ENCODE measurements at regions of chr4 and their contacts with region 1.

Region 1: GRCh38 chr4:151117371-151117962 is 18.0 kb downstream of the RPS3A start:
- DNase-seq: peak; percentile 58 to 71
- H3K4me3 ChIP-seq: no peak overlapping the region
- H3K4me3 Mint-ChIP-seq: no peak overlapping the region
- H3K27ac Mint-ChIP-seq: no peak overlapping the region
- H3K4me1 ChIP-seq: peaks cover 4% of the 10 kb centered on the region; the same call in 1 of the 2 replicates
- H3K4me1 Mint-ChIP-seq: no peaks in the 10 kb centered on the region
- H3K27me3 ChIP-seq: no peaks in the 10 kb centered on the region
- H3K27me3 Mint-ChIP-seq: no peaks in the 10 kb centered on the region
- CTCF ChIP-seq: peak; percentile 69 to 70

Region 2: GRCh38 chr4:151276787-151277562 is 159.5 kb after region 1 on chr4 and contains the start of gene PRSS48:
- CTCF ChIA-PET with region 1: no interaction called
- POLR2A ChIA-PET with region 1: no interaction called
- intact Hi-C with region 1: loop called (anchors 10 kb)
- DNase-seq: peak; percentile 74 to 85
- H3K4me3 ChIP-seq: no peak within 1 kb of the TSS
- H3K4me3 Mint-ChIP-seq: no peak within 1 kb of the TSS
- H3K27ac Mint-ChIP-seq: peak within 1 kb of the TSS; percentile 49
- H3K4me1 ChIP-seq: peaks cover 9% of the 10 kb centered on the region
- H3K4me1 Mint-ChIP-seq: peaks cover 33% of the 10 kb centered on the region
- H3K27me3 ChIP-seq: no peaks in the 10 kb centered on the region
- H3K27me3 Mint-ChIP-seq: no peaks in the 10 kb centered on the region
- CTCF ChIP-seq: peak; percentile 75 to 80
- total RNA-seq, gene PRSS48: not detected in 2 replicates

Region 3: DNA sequence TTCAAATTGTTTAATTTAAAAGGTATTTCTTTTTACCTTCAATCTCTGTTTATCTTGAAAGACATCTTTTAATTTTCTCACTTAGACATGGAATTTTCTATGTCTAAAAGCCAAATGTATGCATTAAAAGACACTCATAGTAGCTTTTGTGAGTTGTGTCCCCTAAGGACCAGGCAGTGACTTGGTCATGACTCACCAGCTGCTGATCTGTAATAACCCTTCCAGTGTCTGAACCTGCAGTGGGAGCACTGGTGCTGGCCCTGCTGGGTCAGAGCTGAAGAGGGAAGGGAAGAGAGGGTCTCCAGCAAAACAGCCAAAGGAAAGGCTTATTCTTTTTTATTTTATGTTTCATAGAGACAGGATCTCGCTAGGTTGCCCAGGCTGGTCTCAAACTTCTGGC is 239.0 kb after region 1 on chr4:
- CTCF ChIA-PET with region 1: no interaction called
- POLR2A ChIA-PET with region 1: no interaction called
- intact Hi-C with region 1: no loop called
- DNase-seq: no peak
- H3K4me3 ChIP-seq: no peak overlapping the region
- H3K4me3 Mint-ChIP-seq: no peak overlapping the region
- H3K27ac Mint-ChIP-seq: no peak overlapping the region
- H3K4me1 ChIP-seq: no peaks in the 10 kb centered on the region
- H3K4me1 Mint-ChIP-seq: peaks cover 12% of the 10 kb centered on the region
- H3K27me3 ChIP-seq: no peaks in the 10 kb centered on the region
- H3K27me3 Mint-ChIP-seq: no peaks in the 10 kb centered on the region
- CTCF ChIP-seq: no peak

Region 4: DNA sequence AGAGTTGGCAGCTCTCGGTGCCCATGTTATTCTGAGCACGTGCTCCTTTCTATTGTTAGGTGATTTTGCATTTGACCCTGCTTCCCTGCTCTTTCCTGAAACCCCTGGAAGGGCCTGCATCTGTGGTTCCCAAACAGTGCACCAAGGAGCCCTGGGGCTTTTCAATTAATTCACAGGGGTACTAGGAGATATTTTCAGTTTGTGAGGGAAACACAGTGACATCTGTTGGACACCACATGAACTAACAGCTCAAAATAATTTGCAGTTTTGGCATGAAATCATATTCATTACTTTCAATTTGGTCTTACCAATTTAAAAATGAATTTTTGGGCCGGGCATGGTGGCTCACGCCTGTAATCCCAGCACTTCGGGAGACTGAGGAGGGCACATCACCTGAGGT is 486.8 kb after region 1 on chr4:
- CTCF ChIA-PET with region 1: interaction called, 9 read pairs
- POLR2A ChIA-PET with region 1: no interaction called
- intact Hi-C with region 1: loop called (anchors 2 kb)
- DNase-seq: no peak
- H3K4me3 ChIP-seq: no peak overlapping the region
- H3K4me3 Mint-ChIP-seq: no peak overlapping the region
- H3K27ac Mint-ChIP-seq: no peak overlapping the region
- H3K4me1 ChIP-seq: peaks cover 18% of the 10 kb centered on the region
- H3K4me1 Mint-ChIP-seq: peaks cover 3% of the 10 kb centered on the region
- H3K27me3 ChIP-seq: no peaks in the 10 kb centered on the region
- H3K27me3 Mint-ChIP-seq: no peaks in the 10 kb centered on the region
- CTCF ChIP-seq: peak; percentile 23 to 62

Region 5: GRCh38 chr4:151614561-151614960 is 497.1 kb after region 1 on chr4:
- CTCF ChIA-PET with region 1: no interaction called
- POLR2A ChIA-PET with region 1: no interaction called
- intact Hi-C with region 1: loop called (anchors 2 kb)
- DNase-seq: no peak
- H3K4me3 ChIP-seq: no peak overlapping the region
- H3K4me3 Mint-ChIP-seq: no peak overlapping the region
- H3K27ac Mint-ChIP-seq: no peak overlapping the region
- H3K4me1 ChIP-seq: no peaks in the 10 kb centered on the region
- H3K4me1 Mint-ChIP-seq: no peaks in the 10 kb centered on the region
- H3K27me3 ChIP-seq: no peaks in the 10 kb centered on the region
- H3K27me3 Mint-ChIP-seq: no peaks in the 10 kb centered on the region
- CTCF ChIP-seq: no peak

Region 6: DNA sequence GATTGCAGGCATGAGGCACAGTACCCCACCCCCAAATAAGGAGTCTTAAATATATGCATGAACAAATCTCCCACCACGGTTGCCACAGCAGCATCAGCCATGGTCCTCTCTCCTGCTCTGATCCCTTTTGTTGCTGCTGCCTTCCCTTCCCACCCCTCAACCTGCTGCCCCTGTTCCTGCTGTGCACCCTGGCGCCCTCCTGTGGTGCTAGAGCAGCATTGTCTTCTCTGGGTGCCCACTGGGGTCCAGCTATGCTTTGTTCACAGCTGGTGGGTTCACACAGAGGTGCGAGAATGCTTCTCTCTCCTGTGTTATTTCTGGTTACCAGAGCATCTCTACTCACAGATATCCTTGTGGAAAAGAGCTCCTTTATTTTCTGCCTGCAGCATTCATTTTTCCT is 527.2 kb after region 1 on chr4:
- CTCF ChIA-PET with region 1: no interaction called
- POLR2A ChIA-PET with region 1: no interaction called
- intact Hi-C with region 1: loop called (anchors 10 kb)
- DNase-seq: peak; percentile 48 to 49
- H3K4me3 ChIP-seq: no peak overlapping the region
- H3K4me3 Mint-ChIP-seq: no peak overlapping the region
- H3K27ac Mint-ChIP-seq: no peak overlapping the region
- H3K4me1 ChIP-seq: no peaks in the 10 kb centered on the region
- H3K4me1 Mint-ChIP-seq: no peaks in the 10 kb centered on the region
- H3K27me3 ChIP-seq: no peaks in the 10 kb centered on the region
- H3K27me3 Mint-ChIP-seq: no peaks in the 10 kb centered on the region
- CTCF ChIP-seq: peak; percentile 33 to 55